ENCODE measurements at regions of chr6 and their contacts with region 1.

Region 1: GRCh38 chr6:96897383-96898240 is at the start of gene NDUFAF4:
- DNase-seq: peak; percentile 96
- ATAC-seq: peak; percentile 95
- H3K4me3 ChIP-seq: peak within 1 kb of the TSS; percentile 89 to 96 (median 92)
- H3K4me3 Mint-ChIP-seq: peak within 1 kb of the TSS; percentile 99
- H3K27ac ChIP-seq: peak within 1 kb of the TSS; percentile 83 to 93
- H3K27ac Mint-ChIP-seq: peak within 1 kb of the TSS; percentile 97
- H3K4me1 ChIP-seq: peaks cover 16 to 22% of the 10 kb centered on the region in 2 donors
- H3K4me1 Mint-ChIP-seq: peaks cover 27% of the 10 kb centered on the region
- H3K27me3 ChIP-seq: no peaks in the 10 kb centered on the region
- H3K27me3 Mint-ChIP-seq: peaks cover 11% of the 10 kb centered on the region
- CTCF ChIP-seq: peak; percentile 92
- total RNA-seq, gene NDUFAF4: 16.3 TPM in 2 replicates

Region 2: DNA sequence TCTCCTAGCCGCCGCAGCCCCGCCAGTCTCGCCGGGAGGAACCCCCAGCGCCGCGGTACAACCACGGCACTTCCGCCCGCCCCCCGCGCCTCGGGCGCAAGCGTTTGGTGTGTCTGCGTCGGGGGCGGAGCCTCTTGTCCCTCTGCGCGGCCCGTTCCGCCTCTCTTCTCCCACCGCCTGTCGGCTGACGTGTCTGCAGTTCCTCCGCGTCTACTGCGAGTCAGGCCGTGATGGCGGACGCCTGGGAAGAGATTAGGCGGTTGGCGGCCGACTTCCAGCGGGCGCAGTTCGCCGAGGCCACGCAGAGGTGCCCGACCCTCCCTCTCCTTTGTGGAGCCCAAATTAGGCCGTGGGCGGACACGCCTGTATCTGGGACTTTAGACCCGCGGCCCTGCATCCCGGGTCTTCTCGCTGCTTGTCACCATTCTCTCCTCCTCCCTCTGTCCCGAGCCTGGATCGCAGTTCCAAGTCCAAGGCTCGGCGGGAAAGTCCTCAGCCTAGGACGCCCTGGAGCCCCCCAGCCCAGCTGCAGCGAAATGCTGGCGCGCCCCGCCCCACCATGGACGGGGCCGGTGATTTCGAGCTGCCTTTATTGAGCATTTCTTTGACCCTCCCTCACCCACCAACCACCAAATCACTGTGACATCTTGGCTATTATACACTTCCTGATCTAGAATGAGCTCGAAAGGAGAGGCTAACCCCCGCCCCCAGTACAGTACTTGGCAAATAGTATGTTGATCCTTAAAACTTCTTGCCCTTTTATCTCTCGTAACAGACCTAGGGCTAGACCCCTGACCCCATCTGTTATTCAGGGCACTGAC is 375.8 kb before region 1 on chr6 and contains the start of gene UFL1:
- CTCF ChIA-PET with region 1: no interaction called
- POLR2A ChIA-PET with region 1: interaction called, 3 read pairs
- intact Hi-C with region 1: loop called (anchors 1 kb)
- DNase-seq: peak; percentile 96
- ATAC-seq: peak; percentile 94
- H3K4me3 ChIP-seq: peak within 1 kb of the TSS; percentile 86 to 96 (median 93)
- H3K4me3 Mint-ChIP-seq: peak within 1 kb of the TSS; percentile 100
- H3K27ac ChIP-seq: peak within 1 kb of the TSS; percentile 98 to 100
- H3K27ac Mint-ChIP-seq: peak within 1 kb of the TSS; percentile 100
- H3K4me1 ChIP-seq: peaks cover 17 to 19% of the 10 kb centered on the region in 2 donors
- H3K4me1 Mint-ChIP-seq: peaks cover 25% of the 10 kb centered on the region
- H3K27me3 ChIP-seq: no peaks in the 10 kb centered on the region
- H3K27me3 Mint-ChIP-seq: no peaks in the 10 kb centered on the region
- CTCF ChIP-seq: peak; percentile 26
- total RNA-seq, gene UFL1: 24.6 and 25.0 TPM in 2 replicates

Region 3: DNA sequence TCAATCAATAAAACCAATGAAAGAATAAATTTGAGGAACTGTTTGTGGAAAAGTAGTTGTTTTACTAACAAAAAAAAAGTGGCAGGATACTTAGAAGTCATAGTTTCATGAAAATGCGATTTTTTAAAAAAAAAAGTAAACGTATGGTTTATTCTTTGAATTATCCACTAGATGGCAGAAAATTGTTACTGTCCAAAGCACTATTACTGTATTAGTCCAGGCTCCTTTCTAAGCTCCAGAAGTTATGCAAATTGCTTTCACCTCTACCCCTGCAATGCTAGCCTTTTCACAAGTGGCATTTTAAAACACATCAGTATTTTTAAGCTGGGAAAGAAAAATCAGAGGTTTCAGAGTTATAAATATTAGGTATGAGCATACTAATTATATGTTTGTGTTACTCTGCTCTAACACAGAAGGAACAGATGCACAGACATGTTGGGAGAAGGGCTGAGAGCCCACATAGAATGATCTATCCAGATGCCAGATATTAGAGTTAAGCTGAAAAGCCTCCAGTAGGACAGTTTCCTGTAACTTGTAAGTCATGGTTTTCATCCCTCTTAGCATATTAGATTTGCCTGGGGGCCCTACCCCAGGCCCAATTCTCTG is 270.8 kb before region 1 on chr6:
- CTCF ChIA-PET with region 1: no interaction called
- POLR2A ChIA-PET with region 1: no interaction called
- intact Hi-C with region 1: loop called (anchors 2 kb)
- DNase-seq: peak; percentile 40
- ATAC-seq: peak; percentile 67
- H3K4me3 ChIP-seq: no peak overlapping the region
- H3K4me3 Mint-ChIP-seq: no peak overlapping the region
- H3K27ac ChIP-seq: no peak overlapping the region
- H3K27ac Mint-ChIP-seq: no peak overlapping the region
- H3K4me1 ChIP-seq: peaks cover 3 to 4% of the 10 kb centered on the region in 2 donors
- H3K4me1 Mint-ChIP-seq: peaks cover 4% of the 10 kb centered on the region
- H3K27me3 ChIP-seq: no peaks in the 10 kb centered on the region
- H3K27me3 Mint-ChIP-seq: peaks cover 13% of the 10 kb centered on the region
- CTCF ChIP-seq: peak; percentile 63

Region 4: GRCh38 chr6:97053643-97054411 is 156.2 kb after region 1 on chr6:
- CTCF ChIA-PET with region 1: interaction called, 10 read pairs
- POLR2A ChIA-PET with region 1: no interaction called
- intact Hi-C with region 1: loop called (anchors 1 kb)
- DNase-seq: no peak
- ATAC-seq: no peak
- H3K4me3 ChIP-seq: no peak overlapping the region
- H3K4me3 Mint-ChIP-seq: no peak overlapping the region
- H3K27ac ChIP-seq: no peak overlapping the region
- H3K27ac Mint-ChIP-seq: no peak overlapping the region
- H3K4me1 ChIP-seq: peaks cover 17% of the 10 kb centered on the region in 2 donors
- H3K4me1 Mint-ChIP-seq: peaks cover 25% of the 10 kb centered on the region
- H3K27me3 ChIP-seq: no peaks in the 10 kb centered on the region
- H3K27me3 Mint-ChIP-seq: peaks cover 1% of the 10 kb centered on the region
- CTCF ChIP-seq: peak; percentile 53

Region 5: GRCh38 chr6:97059473-97059872 is 161.9 kb after region 1 on chr6:
- CTCF ChIA-PET with region 1: interaction called, 13 read pairs
- POLR2A ChIA-PET with region 1: no interaction called
- intact Hi-C with region 1: loop called (anchors 1 kb)
- DNase-seq: peak; percentile 54
- ATAC-seq: peak; percentile 47
- H3K4me3 ChIP-seq: no peak overlapping the region
- H3K4me3 Mint-ChIP-seq: no peak overlapping the region
- H3K27ac ChIP-seq: no peak overlapping the region
- H3K27ac Mint-ChIP-seq: no peak overlapping the region
- H3K4me1 ChIP-seq: no peaks in the 10 kb centered on the region
- H3K4me1 Mint-ChIP-seq: no peaks in the 10 kb centered on the region
- H3K27me3 ChIP-seq: no peaks in the 10 kb centered on the region
- H3K27me3 Mint-ChIP-seq: peaks cover 12% of the 10 kb centered on the region
- CTCF ChIP-seq: peak; percentile 72

Region 6: GRCh38 chr6:97231911-97232310 is 334.3 kb after region 1 on chr6:
- CTCF ChIA-PET with region 1: no interaction called
- POLR2A ChIA-PET with region 1: no interaction called
- intact Hi-C with region 1: no loop called
- DNase-seq: no peak
- ATAC-seq: no peak
- H3K4me3 ChIP-seq: no peak overlapping the region
- H3K4me3 Mint-ChIP-seq: no peak overlapping the region
- H3K27ac ChIP-seq: no peak overlapping the region
- H3K27ac Mint-ChIP-seq: no peak overlapping the region
- H3K4me1 ChIP-seq: no peaks in the 10 kb centered on the region
- H3K4me1 Mint-ChIP-seq: no peaks in the 10 kb centered on the region
- H3K27me3 ChIP-seq: no peaks in the 10 kb centered on the region
- H3K27me3 Mint-ChIP-seq: no peaks in the 10 kb centered on the region
- CTCF ChIP-seq: no peak

Region 7: GRCh38 chr6:97282726-97283617 is 385.4 kb after region 1 on chr6 and contains the start of gene MMS22L:
- CTCF ChIA-PET with region 1: no interaction called
- POLR2A ChIA-PET with region 1: no interaction called
- intact Hi-C with region 1: loop called (anchors 1 kb)
- DNase-seq: peak; percentile 95
- ATAC-seq: peak; percentile 98
- H3K4me3 ChIP-seq: peak within 1 kb of the TSS; percentile 68 to 93 (median 88)
- H3K4me3 Mint-ChIP-seq: peak within 1 kb of the TSS; percentile 97
- H3K27ac ChIP-seq: peak within 1 kb of the TSS; percentile 40 to 44
- H3K27ac Mint-ChIP-seq: peak within 1 kb of the TSS; percentile 91
- H3K4me1 ChIP-seq: peaks cover 9 to 10% of the 10 kb centered on the region in 2 donors
- H3K4me1 Mint-ChIP-seq: peaks cover 21% of the 10 kb centered on the region
- H3K27me3 ChIP-seq: no peaks in the 10 kb centered on the region
- H3K27me3 Mint-ChIP-seq: no peaks in the 10 kb centered on the region
- CTCF ChIP-seq: no peak
- total RNA-seq, gene MMS22L: 20.5 and 23.5 TPM in 2 replicates

Measured in B cell (primary cell).